Activated B cell treated with CpG ODN at 0.5 μM for 24 hours (primary cell): ENCODE measurements at regions of chr6 and their contacts with region 1.

Region 1: GRCh38 chr6:20534295-20535262 is at the start of gene CDKAL1:
- DNase-seq: peak; percentile 77
- ATAC-seq: peak; percentile 96
- H3K4me3 Mint-ChIP-seq: peak within 1 kb of the TSS; percentile 98
- H3K27ac Mint-ChIP-seq: peak within 1 kb of the TSS; percentile 96
- H3K4me1 Mint-ChIP-seq: peaks cover 26% of the 10 kb centered on the region
- H3K27me3 Mint-ChIP-seq: no peaks in the 10 kb centered on the region
- CTCF ChIP-seq: no peak
- total RNA-seq, gene CDKAL1: 28.7 and 31.9 TPM in 2 replicates

Region 2: GRCh38 chr6:20212392-20213217 is 322.0 kb before region 1 on chr6 and contains the start of gene MBOAT1:
- CTCF ChIA-PET with region 1: no interaction called
- POLR2A ChIA-PET with region 1: no interaction called
- intact Hi-C with region 1: loop called (anchors 1 kb)
- DNase-seq: peak; percentile 43
- ATAC-seq: peak; percentile 73
- H3K4me3 Mint-ChIP-seq: peak within 1 kb of the TSS; percentile 90
- H3K27ac Mint-ChIP-seq: peak within 1 kb of the TSS; percentile 85
- H3K4me1 Mint-ChIP-seq: peaks cover 22% of the 10 kb centered on the region
- H3K27me3 Mint-ChIP-seq: peaks cover 3% of the 10 kb centered on the region
- CTCF ChIP-seq: no peak
- total RNA-seq, gene MBOAT1: 3.5 and 3.7 TPM in 2 replicates

Region 3: DNA sequence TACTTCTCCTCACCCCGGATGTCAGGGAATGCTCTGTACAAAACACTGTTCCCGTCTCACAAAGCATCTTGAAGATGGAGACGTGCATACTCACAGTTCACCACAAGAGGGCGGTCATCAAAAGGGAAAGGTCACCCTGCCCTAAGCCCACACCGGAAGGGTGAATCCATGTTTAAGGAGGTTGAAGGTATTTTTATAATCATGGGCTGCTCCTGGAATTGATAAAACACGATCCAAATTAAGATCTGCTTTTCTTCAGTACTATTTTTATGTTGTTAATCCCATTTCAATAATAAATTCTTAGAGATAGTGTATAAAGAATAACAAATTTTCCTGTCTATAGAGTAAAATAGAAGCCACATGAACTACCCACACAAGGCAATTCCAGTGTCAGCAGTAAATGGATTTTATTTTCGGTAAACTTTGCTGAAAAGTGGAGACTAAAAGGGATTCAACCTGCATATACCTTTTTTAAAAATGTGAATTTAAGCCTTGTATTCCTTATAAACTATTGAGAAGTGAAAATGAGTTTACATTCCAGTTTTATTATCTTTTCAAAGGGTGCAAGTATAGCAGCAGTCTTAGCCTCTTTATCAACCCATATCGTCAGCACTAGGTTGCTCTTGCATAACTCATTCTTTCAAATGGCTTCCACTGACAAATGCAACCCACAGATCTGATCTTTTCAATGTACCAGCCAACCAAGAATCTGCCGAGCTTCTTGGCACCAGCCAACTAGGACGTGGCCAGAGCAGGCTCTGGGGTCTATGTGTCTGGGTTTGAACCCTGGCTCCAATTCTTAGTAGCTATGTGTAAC is 242.6 kb before region 1 on chr6:
- CTCF ChIA-PET with region 1: interaction called, 17 read pairs
- POLR2A ChIA-PET with region 1: interaction called, 3 read pairs
- intact Hi-C with region 1: no loop called
- DNase-seq: peak; percentile 45
- ATAC-seq: peak; percentile 93
- H3K4me3 Mint-ChIP-seq: peak overlapping the region; percentile 8
- H3K27ac Mint-ChIP-seq: no peak overlapping the region
- H3K4me1 Mint-ChIP-seq: peaks cover 3% of the 10 kb centered on the region
- H3K27me3 Mint-ChIP-seq: peaks cover 2% of the 10 kb centered on the region
- CTCF ChIP-seq: peak; percentile 83

Region 4: GRCh38 chr6:20319520-20320357 is 214.8 kb before region 1 on chr6:
- CTCF ChIA-PET with region 1: no interaction called
- POLR2A ChIA-PET with region 1: interaction called, 9 read pairs
- intact Hi-C with region 1: loop called (anchors 1 kb)
- DNase-seq: peak; percentile 71
- ATAC-seq: peak; percentile 96
- H3K4me3 Mint-ChIP-seq: peak overlapping the region; percentile 81
- H3K27ac Mint-ChIP-seq: peak overlapping the region; percentile 96
- H3K4me1 Mint-ChIP-seq: peaks cover 15% of the 10 kb centered on the region
- H3K27me3 Mint-ChIP-seq: no peaks in the 10 kb centered on the region
- CTCF ChIP-seq: no peak